Left cardiac atrium (tissue), 4 donors: ENCODE measurements at regions of chr7 and their contacts with region 1.

Region 1: GRCh38 chr7:151110941-151111645 is 24.8 kb downstream of the AGAP3 start:
- DNase-seq: peak; percentile 83
- ATAC-seq: peak; percentile 74 to 78

Region 2: DNA sequence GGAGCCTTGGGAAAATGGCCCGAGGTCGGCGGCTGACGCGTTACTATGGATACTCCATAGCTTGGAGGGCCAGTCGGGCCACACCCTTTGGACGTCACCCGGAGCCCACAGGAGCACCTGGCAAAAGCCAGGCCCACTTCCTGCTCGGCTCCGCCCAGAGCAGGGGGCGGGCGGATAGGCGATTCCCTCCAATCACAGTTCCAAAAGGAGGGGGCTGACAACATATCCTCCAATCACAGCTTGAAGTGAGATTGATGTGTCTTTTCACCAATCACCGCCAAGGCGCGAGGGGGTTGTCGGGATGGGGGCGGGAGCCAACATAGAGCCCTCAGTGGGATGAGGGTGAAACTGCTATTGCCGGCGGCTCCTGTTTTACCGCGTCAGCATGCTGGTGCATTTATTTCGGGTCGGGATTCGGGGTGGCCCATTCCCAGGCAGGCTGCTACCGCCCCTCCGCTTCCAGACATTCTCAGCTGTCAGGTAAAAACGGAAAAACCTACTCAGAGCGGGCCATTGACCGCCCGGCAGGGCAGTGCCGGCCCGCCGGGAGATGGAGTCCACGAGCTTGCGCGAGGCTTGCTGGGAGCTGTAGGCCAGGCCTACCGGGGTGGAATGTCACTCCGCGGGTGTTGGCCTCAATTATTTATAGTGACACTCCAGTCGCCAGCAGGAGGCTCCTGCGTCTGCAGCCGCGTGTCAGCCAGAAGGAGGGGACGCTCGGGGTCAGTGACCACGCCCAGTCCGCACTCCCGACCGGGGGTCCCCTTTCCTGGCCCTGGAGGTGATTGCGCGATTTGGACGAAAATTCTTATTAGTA is 82.8 kb before region 1 on chr7 and contains the start of gene ABCB8:
- intact Hi-C with region 1: loop called in 1 of 2 experiments (anchors 1 kb)
- DNase-seq: peak; percentile 97
- ATAC-seq: peak; percentile 96 to 98
- total RNA-seq, gene ABCB8: 20.1 to 21.6 TPM